ENCODE measurements at regions of chr6 and their contacts with region 1.

Region 1: DNA sequence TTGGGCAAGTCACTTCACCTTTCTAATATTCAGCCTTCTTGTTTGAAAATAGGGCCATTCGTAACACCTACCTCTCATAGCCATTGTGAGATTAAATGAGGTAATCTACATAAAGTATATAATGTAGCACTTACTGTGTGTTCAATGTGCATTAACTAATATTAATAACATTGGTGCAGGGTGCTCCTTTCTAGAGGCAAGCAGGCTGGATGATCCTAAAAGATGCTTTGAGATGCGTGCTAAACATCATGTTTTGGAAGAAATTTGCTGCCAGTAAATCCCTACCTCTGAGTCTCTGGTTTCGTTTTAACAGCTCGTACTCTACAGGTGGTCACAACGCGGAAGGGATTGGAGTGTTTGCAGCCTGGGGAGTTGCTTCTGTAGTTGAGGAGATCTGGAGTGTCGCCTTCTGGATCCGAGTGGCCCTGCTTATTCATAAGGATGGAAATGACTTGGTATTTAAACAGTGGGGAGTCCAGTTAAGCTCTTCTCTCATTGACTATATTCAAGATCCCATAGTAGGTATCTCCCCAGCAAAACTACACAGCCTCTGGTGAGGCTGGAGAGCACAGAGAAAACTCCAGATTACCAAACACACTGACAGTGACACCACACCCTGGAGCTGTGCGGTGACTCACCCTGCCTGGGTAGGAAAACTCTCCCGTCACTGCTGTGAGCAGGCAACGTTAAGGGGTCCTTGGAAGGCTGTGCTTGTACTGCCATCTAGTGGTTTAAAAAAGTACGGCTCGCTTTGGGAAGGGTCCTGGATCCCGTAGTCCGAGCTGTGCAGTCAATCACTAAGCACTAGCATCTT is 107.9 kb downstream of the MAP3K7 start:
- DNase-seq: peak; percentile 89 to 93 (median 91)
- ATAC-seq: peak; percentile 99 to 100
- H3K4me3 ChIP-seq: no peak overlapping the region
- H3K27ac ChIP-seq: no peak overlapping the region
- H3K4me1 ChIP-seq: peaks cover 3% of the 10 kb centered on the region
- H3K27me3 ChIP-seq: no peaks in the 10 kb centered on the region

Region 2: DNA sequence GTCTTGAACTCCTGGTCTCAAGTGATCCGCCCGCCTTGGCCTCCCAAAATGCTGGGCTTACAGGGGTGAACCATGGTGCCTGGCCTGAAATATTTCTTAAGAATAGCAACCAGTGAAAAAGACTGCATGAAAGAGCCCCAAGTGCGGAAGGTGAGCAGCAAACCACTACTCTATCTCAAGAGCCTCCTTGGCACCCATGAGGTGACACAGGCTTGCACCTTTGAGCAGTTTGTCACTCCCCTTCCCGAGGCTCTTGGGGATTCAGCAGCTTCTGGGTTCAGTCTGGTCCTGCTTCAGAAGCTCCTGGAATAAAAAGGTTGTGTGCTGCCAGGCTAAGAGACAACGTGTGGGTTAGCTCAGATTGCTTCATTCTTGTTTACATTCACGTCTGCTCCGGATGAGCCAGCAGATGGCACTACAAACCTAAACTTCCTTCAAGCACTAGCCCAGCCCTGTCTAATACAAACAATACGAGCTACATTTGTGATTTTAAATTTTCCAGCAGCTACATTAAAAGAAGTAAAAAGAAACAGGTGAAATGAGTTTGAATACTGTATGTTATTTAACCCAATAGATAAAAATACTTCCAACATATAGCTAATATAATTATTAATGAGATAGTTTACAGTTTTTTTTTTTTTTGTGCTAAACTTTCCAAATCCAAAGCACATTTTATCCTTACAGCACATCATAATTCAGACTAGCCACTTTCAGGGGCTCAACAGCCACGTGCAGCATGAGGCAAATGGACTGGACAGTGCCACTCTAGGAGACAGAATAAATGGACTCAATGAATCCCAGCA is 538.6 kb before region 1 on chr6:
- intact Hi-C with region 1: loop called (anchors 2 to 5 kb)
- DNase-seq: peak in 2 of 3 donors; percentile 64 to 80
- ATAC-seq: peak; percentile 92 to 94
- H3K4me3 ChIP-seq: no peak overlapping the region
- H3K27ac ChIP-seq: no peak overlapping the region
- H3K4me1 ChIP-seq: no peaks in the 10 kb centered on the region
- H3K27me3 ChIP-seq: no peaks in the 10 kb centered on the region

Region 3: GRCh38 chr6:90650041-90650940 is 171.3 kb after region 1 on chr6:
- intact Hi-C with region 1: no loop called
- DNase-seq: no peak
- ATAC-seq: no peak
- H3K4me3 ChIP-seq: no peak overlapping the region
- H3K27ac ChIP-seq: no peak overlapping the region
- H3K4me1 ChIP-seq: no peaks in the 10 kb centered on the region
- H3K27me3 ChIP-seq: no peaks in the 10 kb centered on the region

Region 4: GRCh38 chr6:90730151-90730673 is 251.2 kb after region 1 on chr6:
- intact Hi-C with region 1: no loop called
- DNase-seq: no peak
- ATAC-seq: no peak
- H3K4me3 ChIP-seq: no peak overlapping the region
- H3K27ac ChIP-seq: no peak overlapping the region
- H3K4me1 ChIP-seq: no peaks in the 10 kb centered on the region
- H3K27me3 ChIP-seq: no peaks in the 10 kb centered on the region

Measured in right cardiac atrium (tissue), 5 donors.